ENCODE measurements at regions of chr1 and their contacts with region 1.

Region 1: DNA sequence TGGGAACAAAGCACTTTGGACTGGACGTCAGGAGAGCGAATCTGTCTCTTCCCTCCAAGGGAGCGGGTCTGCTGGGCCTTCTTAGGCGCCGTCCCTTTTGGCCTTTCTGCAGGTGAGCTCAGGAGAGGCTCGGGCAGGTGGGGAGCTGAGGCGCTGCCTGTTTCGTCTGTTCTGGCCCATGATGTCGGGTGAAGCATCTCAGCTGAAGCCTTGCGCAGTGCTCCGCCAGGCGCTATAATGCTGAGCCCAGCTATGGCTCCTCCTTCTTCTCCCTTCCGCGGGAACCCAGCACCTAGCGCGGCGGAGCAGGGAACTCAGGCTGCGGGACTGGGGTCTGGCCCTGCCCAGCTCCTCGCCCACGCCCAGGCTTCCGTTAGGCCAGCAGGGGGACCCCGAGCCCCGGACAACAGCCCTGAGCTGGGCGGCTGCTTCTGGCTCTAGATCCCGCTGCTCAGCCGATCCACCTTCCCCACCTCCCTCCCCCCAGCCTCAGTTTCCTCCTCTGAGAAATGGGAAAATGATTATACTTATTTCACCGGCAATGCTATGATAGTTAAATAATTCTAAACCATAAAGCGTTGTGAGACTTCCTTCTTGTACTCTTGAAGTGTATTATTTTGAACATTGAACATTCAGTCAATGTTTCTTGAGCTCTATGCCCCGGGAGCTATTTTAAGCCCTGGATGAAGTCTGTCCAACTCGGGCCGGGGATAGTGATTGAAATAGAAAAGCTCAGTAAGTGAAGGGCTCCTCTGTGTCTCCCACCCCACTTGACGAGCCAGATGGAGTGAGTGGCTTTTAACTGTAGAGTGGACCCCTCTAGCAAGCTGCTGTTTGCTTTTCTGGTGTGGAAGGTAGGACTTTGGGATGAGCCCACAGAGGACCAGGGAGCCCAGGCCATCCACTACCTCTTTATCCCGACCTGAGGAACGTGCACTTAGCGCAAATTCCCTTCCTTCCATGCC is 9.6 kb upstream of the ADORA1 start:
- DNase-seq: peak in 1 of 2 donors; percentile 70
- ATAC-seq: peak; percentile 83

Region 2: DNA sequence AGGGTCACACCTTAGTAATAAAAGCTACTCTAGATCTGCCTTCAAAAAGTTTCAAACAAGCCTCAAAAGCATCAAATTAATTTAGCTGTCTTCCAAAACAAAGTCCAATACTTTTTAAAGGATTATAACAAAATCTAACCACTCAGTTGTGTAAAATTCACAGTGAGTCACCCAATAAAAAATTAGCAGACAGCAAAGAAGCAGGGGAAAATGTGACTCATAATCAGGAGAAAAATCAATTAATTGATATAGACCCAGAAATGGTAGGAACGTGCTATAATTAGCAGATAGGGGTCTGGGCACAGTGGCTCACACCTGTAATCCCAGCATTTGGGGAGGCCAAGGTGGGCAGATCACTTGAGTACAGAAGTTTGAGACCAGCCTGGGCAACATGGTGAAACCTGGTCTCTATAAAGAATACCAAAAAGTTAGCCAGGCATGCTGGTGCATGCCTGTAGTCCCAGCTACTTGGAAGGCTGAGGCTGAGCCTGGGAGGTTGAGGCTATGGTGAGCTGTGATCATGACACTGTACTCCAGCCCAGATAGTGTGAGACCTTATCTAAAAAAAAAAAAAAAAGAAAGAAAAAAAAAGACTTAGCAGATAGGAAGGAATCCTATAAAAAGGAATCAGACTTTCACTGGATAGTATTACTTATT is 24.0 kb before region 1 on chr1:
- intact Hi-C with region 1: loop called in 1 of 2 experiments (anchors 1 kb)
- DNase-seq: no peak
- ATAC-seq: no peak

Region 3: DNA sequence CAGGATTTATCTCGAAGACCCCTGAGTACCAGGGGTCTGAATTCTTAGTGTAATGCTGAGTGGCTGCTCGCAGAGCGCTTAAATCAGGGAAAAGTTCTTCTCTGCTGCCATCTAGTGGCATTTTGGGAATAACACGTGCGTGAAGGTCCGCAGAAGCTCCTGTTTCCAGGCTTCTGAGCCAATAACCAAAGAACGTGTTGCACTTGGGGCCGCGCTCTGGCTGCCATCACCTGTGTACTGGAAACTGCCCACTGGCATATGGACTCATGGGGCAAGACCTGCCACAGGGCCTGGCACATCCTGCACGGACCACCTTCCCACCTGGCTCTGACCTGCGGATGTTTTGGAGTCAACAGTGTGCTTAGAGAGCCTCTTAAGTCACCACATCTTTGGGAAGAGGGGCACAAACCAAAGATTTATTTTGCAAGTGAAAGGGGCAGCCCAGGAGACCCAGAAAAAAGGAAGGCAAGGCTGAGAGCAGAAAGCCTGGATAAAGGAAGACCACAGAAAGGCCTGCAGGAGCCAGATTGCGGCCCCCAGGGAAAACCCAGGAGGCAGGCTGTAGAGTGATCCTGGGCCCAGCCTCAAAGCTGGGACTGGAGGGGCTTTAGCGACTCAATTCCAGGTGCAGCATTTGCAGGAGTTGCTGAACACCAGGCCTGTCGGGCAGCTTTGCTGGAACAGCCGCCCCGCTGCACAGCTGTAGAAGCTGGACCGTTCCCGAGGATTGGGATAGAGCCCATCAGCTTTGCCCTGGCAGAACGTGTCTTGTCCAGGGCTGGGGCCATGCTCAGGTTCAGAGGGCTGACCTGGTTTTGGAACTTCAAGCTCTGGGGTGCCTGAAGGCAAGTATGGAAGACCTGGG is 98.6 kb after region 1 on chr1:
- intact Hi-C with region 1: loop called in 1 of 2 experiments (anchors 5 kb)
- DNase-seq: peak in 1 of 2 donors; percentile 39
- ATAC-seq: peak; percentile 72